K562 (cell line): ENCODE measurements at regions of chr21 and their contacts with region 1.

Region 1: DNA sequence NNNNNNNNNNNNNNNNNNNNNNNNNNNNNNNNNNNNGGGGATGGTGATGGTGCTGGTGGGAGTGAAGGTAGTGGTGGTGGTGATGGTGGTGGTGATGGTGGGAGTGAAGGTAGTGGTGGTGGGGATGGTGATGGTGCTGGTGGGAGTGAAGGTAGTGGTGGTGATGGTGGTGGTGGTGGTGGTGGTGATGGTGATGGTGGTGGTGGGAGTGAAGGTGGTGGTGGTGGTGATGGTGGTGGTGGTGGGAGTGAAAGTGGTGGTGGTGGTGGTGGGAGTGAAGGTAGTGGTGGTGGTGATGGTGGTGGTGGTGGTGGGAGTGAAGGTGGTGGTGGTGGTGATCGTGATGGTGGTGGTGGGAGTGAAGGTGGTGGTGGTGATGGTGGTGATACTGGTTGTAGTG is 93.6 kb downstream of the CRYAA start:
- DNase-seq: no peak
- ATAC-seq: no peak
- H3K4me3 ChIP-seq: no peak overlapping the region
- H3K27ac ChIP-seq: no peak overlapping the region
- H3K4me1 ChIP-seq: no peaks in the 10 kb centered on the region
- H3K27me3 ChIP-seq: peaks cover 6 to 15% of the 10 kb centered on the region in 2 experiments; a peak in 2 of 5 replicates
- CTCF ChIP-seq: no peak
- EP300 ChIP-seq: no peak
- POLR2A ChIP-seq: no peak
- RAD21 ChIP-seq: no peak

Region 2: GRCh38 chr21:42923541-42924432 is 338.6 kb before region 1 on chr21:
- CTCF ChIA-PET with region 1: no interaction called
- POLR2A ChIA-PET with region 1: no interaction called
- in situ Hi-C with region 1: no loop called
- intact Hi-C with region 1: no loop called
- DNase-seq: peak; percentile 90 to 98 (median 94)
- ATAC-seq: peak; percentile 97
- H3K4me3 ChIP-seq: no peak overlapping the region
- H3K27ac ChIP-seq: peak overlapping the region; percentile 79
- H3K4me1 ChIP-seq: peaks cover 30 to 36% of the 10 kb centered on the region in 2 experiments
- H3K27me3 ChIP-seq: no peaks in the 10 kb centered on the region
- CTCF ChIP-seq: peak; percentile 89 to 97 (median 93)
- EP300 ChIP-seq: peak; percentile 69
- POLR2A ChIP-seq: peak; percentile 82
- RAD21 ChIP-seq: peak; percentile 99

Region 3: GRCh38 chr21:43211072-43211759 is 51.2 kb before region 1 on chr21:
- CTCF ChIA-PET with region 1: no interaction called
- POLR2A ChIA-PET with region 1: no interaction called
- in situ Hi-C with region 1: loop called (anchors 5 kb)
- intact Hi-C with region 1: no loop called
- DNase-seq: no peak
- ATAC-seq: peak; percentile 33; the same call in 1 of the 3 replicates
- H3K4me3 ChIP-seq: no peak overlapping the region
- H3K27ac ChIP-seq: no peak overlapping the region
- H3K4me1 ChIP-seq: no peaks in the 10 kb centered on the region
- H3K27me3 ChIP-seq: peaks cover 8 to 40% of the 10 kb centered on the region in 2 experiments; a peak in 4 of 5 replicates
- CTCF ChIP-seq: 0 out of 6 replicates have a peak, but pooled peaks of 1 of the 3 experiments have one; percentile 21
- EP300 ChIP-seq: no peak
- POLR2A ChIP-seq: no peak
- RAD21 ChIP-seq: no peak